SK-N-SH (cell line): ENCODE measurements at regions of chr11 and their contacts with region 1.

Region 1: DNA sequence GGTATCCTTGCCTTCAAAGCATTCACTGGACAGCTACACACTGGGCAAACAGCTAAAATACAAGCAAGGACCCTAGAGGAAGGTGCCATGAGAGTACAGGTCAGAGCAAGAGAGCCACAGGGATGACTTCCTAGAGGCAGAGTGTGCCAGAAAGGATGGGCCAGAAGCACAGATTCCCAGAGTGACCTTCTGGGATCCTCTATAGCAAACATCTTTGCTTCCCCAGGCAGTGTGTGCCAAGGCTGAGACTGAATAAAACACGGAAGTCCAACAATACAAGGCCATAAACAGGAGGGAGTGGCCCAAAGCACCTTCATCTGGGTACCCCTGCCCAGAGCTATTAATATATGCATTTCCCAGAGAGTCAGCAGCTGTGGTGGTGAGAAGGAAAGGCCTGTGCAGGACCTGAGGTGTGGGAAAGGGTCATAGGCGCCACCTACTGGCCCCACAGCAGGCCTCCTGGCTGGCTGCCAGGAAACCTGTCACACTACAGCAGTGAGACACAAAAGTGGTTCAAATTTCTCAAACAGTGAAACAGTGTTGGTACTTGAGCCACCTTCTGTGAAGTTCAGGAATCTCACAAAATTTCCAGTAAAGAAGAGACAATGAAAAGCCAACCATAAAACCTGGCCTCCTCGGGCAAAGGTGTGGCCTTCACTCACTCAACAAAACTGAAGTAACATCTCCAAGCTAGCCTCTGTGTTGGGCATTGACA is 20.3 kb downstream of the CLPB start:
- DNase-seq: peak; percentile 80
- H3K4me3 ChIP-seq: no peak overlapping the region
- H3K27ac ChIP-seq: peak overlapping the region; percentile 52 to 100; a peak in 3 of 4 replicates
- H3K4me1 ChIP-seq: peaks cover 23 to 52% of the 10 kb centered on the region in 2 experiments
- H3K27me3 ChIP-seq: no peaks in the 10 kb centered on the region
- CTCF ChIP-seq: peak; percentile 93
- EP300 ChIP-seq: peak in 1 of 2 experiments; percentile 78; a peak in 2 of 4 replicates
- RAD21 ChIP-seq: peak; percentile 97

Region 2: GRCh38 chr11:71563401-71563800 is 850.7 kb before region 1 on chr11:
- CTCF ChIA-PET with region 1: no interaction called
- POLR2A ChIA-PET with region 1: no interaction called
- DNase-seq: peak; percentile 65
- H3K4me3 ChIP-seq: no peak overlapping the region
- H3K27ac ChIP-seq: no peak overlapping the region
- H3K4me1 ChIP-seq: peaks cover 0 to 7% of the 10 kb centered on the region in 2 experiments; a peak in 1 of 4 replicates
- H3K27me3 ChIP-seq: no peaks in the 10 kb centered on the region
- CTCF ChIP-seq: no peak; the same call in 1 of the 2 replicates
- EP300 ChIP-seq: no peak
- RAD21 ChIP-seq: peak; percentile 68

Region 3: DNA sequence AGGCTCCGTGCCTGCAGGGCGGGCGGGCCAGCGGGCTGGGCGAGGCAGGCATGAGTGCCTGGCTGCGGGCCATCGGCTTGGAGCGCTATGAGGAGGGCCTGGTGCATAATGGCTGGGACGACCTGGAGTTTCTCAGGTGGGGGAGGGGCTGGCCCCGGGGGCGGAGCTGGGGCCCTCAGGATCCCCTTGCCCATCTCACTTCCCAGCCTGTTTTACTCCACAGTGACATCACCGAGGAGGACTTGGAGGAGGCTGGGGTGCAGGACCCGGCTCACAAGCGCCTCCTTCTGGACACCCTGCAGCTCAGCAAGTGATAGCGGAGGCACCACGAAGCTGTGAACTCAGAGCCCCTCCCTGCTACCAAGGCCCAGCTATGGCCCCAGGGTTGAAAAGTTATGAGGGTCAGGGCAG is 176.0 kb before region 1 on chr11:
- CTCF ChIA-PET with region 1: interaction called, 43 read pairs
- POLR2A ChIA-PET with region 1: interaction called, 187 read pairs
- DNase-seq: peak; percentile 87
- H3K4me3 ChIP-seq: peak overlapping the region; percentile 30 to 83; a peak in 2 of 4 replicates
- H3K27ac ChIP-seq: peak overlapping the region; percentile 64 to 90
- H3K4me1 ChIP-seq: peaks cover 17 to 27% of the 10 kb centered on the region in 2 experiments; a peak in 2 of 4 replicates
- H3K27me3 ChIP-seq: no peaks in the 10 kb centered on the region
- CTCF ChIP-seq: peak; percentile 91
- EP300 ChIP-seq: no peak
- RAD21 ChIP-seq: peak; percentile 56

Region 4: GRCh38 chr11:72321381-72321996 is 92.6 kb before region 1 on chr11:
- CTCF ChIA-PET with region 1: interaction called, 26 read pairs
- POLR2A ChIA-PET with region 1: interaction called, 20 read pairs
- DNase-seq: peak; percentile 78
- H3K4me3 ChIP-seq: no peak overlapping the region
- H3K27ac ChIP-seq: peak overlapping the region; percentile 75 to 100
- H3K4me1 ChIP-seq: peaks cover 34 to 72% of the 10 kb centered on the region in 2 experiments
- H3K27me3 ChIP-seq: no peaks in the 10 kb centered on the region
- CTCF ChIP-seq: no peak
- EP300 ChIP-seq: peak; percentile 95 to 100
- RAD21 ChIP-seq: peak; percentile 44; the same call in 1 of the 2 replicates

Region 5: DNA sequence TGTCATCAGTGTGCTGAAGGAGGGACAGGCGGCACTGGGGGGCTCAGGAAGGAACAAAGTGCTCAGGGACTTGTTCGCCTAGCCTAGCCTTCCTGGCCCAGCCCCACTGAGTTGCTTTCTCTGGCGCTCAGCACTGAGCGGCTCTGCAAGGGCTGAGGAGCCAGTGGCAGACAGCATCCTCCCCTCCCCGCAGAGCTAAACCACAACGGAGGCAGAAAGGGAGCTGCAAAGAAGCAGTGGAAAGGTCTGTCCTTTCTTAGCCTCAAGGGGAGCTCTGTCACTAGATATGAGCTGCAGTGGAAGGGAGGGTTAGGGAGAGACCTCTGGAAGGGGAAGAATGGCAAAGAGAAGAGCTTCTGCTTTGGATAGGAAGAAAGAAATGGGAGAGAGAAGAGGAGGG is 80.4 kb before region 1 on chr11:
- CTCF ChIA-PET with region 1: interaction called, 26 read pairs
- POLR2A ChIA-PET with region 1: interaction called, 18 read pairs
- DNase-seq: peak; percentile 61
- H3K4me3 ChIP-seq: no peak overlapping the region
- H3K27ac ChIP-seq: peak overlapping the region; percentile 35 to 99; a peak in 3 of 4 replicates
- H3K4me1 ChIP-seq: peaks cover 32 to 75% of the 10 kb centered on the region in 2 experiments
- H3K27me3 ChIP-seq: no peaks in the 10 kb centered on the region
- CTCF ChIP-seq: peak; percentile 52
- EP300 ChIP-seq: peak in 1 of 2 experiments; percentile 59; a peak in 1 of 4 replicates
- RAD21 ChIP-seq: peak; percentile 73

Region 6: GRCh38 chr11:72352859-72353551 is 61.1 kb before region 1 on chr11:
- CTCF ChIA-PET with region 1: interaction called, 625 read pairs
- POLR2A ChIA-PET with region 1: interaction called, 368 read pairs
- DNase-seq: peak; percentile 51
- H3K4me3 ChIP-seq: no peak overlapping the region
- H3K27ac ChIP-seq: peak overlapping the region; percentile 71 to 100
- H3K4me1 ChIP-seq: peaks cover 41 to 92% of the 10 kb centered on the region in 2 experiments
- H3K27me3 ChIP-seq: no peaks in the 10 kb centered on the region
- CTCF ChIP-seq: peak; percentile 77
- EP300 ChIP-seq: peak in 1 of 2 experiments; percentile 86; a peak in 2 of 4 replicates
- RAD21 ChIP-seq: peak; percentile 97

Region 7: DNA sequence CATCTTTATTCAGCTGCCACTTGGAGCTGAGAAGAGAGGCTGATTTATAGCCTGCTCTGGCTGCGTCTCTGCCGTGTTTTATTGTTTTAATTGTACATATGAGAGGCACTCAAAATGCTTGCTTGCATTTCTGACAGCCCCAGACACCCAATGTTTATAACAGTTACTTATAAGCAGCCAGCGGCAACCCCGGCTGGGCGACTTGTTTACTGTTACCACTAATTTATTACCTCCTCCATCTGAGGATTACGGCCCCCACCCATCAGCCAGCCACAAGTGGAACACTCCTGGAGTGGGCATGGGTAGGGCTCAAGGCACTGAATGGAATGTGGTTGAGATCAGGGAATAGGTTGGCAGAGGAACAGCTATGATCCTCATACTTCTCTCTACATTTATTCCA is 40.9 kb before region 1 on chr11:
- CTCF ChIA-PET with region 1: interaction called, 625 read pairs
- POLR2A ChIA-PET with region 1: interaction called, 36 read pairs
- DNase-seq: no peak
- H3K4me3 ChIP-seq: no peak overlapping the region
- H3K27ac ChIP-seq: peak overlapping the region in 1 of 2 experiments; percentile 99; a peak in 2 of 4 replicates
- H3K4me1 ChIP-seq: peaks cover 20 to 44% of the 10 kb centered on the region in 2 experiments
- H3K27me3 ChIP-seq: no peaks in the 10 kb centered on the region
- CTCF ChIP-seq: no peak
- EP300 ChIP-seq: 0 out of 4 replicates have a peak, but pooled peaks of 1 of the 2 experiments have one; percentile 13
- RAD21 ChIP-seq: no peak